Sigmoid colon (tissue), 7 donors: ENCODE measurements at regions of chr14 and their contacts with region 1.

Region 1: DNA sequence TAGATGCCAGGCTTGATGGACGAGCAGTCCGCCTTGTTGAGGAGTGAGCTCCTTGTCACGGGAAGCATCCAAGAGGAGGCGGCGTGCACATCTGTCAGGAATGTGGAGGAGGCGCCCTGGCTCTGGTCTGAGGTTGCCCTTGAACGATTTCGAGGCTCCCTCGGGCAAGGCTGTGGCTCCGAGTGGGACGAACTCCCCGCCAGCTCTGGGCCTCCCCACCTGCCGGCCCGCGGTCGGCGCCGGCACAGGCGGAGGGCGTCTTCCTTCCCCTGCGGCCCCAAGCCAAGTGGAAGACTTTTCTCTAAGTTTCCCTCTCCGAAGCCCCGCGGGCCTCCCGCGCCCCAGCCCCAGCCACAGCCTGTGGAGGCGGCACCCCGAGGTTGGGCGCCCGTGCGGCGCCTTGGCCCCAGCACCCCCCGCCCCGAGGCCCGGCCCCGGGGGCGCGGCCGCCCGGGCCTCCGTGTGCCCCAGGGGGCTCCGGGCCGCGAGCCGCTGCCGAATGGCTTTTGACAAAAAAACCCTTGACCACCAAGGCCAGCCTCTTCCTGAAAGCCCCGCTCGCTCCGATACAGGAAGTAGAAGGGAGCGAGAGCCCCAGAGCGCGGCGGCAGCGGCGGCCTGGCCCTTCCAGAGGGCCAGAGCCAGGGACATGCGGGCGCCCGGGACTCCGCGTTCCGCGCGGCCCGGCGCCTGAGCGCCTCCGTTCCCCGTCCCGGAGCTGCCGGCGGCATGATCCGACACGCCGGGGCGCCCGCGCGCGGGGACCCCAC is at the start of gene RIN3:
- DNase-seq: peak; percentile 81
- H3K4me3 ChIP-seq: peak within 1 kb of the TSS; percentile 67 to 88 (median 84)
- H3K27ac ChIP-seq: peak within 1 kb of the TSS; percentile 84 to 99 (median 92)
- H3K4me1 ChIP-seq: peaks cover 0 to 68% (median 44%) of the 10 kb centered on the region in 4 donors
- H3K27me3 ChIP-seq: no peaks in the 10 kb centered on the region
- CTCF ChIP-seq: no peak
- EP300 ChIP-seq: no peak
- POLR2A ChIP-seq: no peak
- total RNA-seq, gene RIN3: 12.7 to 31.8 (median 23.0) TPM

Region 2: DNA sequence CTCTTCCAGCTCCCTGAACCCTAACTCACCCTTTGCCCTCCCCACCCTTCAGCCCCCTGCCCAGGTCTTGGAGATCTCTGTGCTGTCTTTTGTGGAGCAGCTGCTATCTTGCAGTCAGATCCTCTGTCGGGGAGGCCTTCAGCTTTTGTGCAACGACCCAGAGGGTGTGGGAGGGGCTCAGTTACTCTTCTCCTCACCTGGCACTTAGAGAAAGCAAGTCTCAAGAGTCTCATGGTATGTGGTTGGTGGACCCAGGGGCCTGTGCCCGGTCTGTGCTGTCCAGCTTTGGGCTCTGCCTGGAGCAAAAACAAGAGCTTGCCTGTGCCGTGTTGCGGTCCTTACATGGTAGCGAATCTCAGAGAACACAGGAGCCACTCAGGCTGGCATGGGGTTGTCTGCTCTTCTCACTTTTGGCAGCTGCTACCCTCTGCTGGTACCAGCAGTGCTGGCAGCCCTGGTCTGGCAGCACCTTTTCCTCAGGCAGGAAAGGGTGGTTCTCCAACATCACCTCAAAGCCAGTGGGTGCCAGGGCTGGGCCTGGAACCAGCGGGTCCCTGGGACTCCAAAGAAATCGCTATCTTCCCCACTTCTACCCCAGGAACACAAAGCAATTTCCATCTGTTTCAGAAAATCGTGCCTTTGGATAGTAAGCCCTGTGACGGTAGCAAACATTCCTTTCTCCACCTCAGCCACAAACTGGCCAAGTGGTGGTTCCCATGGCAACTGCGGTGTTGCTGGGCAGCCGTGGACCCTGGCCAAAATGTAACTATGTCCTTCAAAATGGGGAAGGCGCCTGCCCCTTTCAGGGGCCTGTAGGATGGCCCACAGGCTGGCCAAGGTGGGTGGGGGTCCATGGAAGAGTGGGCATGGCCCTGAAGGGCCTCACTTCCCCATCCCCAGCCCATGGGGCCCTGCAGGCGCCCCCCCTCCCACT is 90.2 kb after region 1 on chr14:
- intact Hi-C with region 1: loop called (anchors 2 kb)
- DNase-seq: peak; percentile 93
- H3K4me3 ChIP-seq: no peak overlapping the region
- H3K27ac ChIP-seq: peak overlapping the region; percentile 83 to 95 (median 88)
- H3K4me1 ChIP-seq: peaks cover 0 to 80% (median 62%) of the 10 kb centered on the region in 4 donors
- H3K27me3 ChIP-seq: no peaks in the 10 kb centered on the region
- CTCF ChIP-seq: peak in 3 of 4 experiments; percentile 9 to 17 (median 11)
- EP300 ChIP-seq: peak in 1 of 4 donors; percentile 38
- POLR2A ChIP-seq: no peak

Region 3: DNA sequence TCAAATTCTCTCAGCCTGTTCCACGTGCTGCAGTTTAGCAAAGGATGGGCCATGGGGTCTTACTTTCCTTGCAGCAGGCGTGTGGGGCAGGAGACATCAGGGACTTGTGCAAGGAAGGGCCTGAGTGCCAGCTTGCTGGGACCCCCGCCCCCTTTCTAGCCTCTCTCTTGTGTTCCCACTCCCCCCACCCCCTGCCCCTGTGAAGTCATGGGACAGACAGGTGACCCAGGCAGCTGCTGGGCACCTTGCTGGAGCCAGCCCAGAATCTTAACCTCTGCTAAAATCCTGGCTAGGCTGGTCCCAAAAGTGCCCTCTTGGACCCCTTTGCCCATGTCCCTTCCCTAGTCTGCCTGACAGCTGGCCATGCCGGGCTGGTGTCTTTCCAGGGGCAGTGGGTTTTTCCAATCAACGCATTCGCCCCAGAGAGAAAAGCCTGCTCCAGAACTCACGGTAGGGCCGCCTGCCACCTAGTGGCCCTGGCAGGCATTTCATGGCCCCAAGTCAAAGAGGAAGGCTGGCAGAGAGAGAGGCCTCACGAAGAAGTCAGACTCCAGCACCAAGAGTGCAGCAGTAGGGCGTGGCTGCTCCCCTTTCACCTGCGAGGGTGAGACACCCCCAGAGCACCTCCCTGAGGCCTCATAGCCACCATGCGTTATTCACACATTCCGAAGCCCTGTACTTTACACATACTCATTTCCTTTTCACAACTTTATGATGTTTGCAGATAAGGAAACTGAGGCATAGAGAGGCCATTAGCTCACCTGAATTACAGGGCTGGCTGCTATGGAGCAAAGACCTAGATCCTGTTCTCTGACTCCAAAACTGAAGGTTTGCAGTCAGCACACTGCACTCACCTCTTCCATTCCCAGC is 167.6 kb after region 1 on chr14:
- intact Hi-C with region 1: loop called (anchors 5 kb)
- DNase-seq: peak; percentile 89
- H3K4me3 ChIP-seq: no peak overlapping the region
- H3K27ac ChIP-seq: peak overlapping the region in 3 of 4 donors; percentile 58 to 66 (median 59)
- H3K4me1 ChIP-seq: peaks cover 0 to 16% (median 11%) of the 10 kb centered on the region in 4 donors
- H3K27me3 ChIP-seq: no peaks in the 10 kb centered on the region
- CTCF ChIP-seq: peak; percentile 70 to 95 (median 92)
- EP300 ChIP-seq: no peak
- POLR2A ChIP-seq: no peak

Region 4: DNA sequence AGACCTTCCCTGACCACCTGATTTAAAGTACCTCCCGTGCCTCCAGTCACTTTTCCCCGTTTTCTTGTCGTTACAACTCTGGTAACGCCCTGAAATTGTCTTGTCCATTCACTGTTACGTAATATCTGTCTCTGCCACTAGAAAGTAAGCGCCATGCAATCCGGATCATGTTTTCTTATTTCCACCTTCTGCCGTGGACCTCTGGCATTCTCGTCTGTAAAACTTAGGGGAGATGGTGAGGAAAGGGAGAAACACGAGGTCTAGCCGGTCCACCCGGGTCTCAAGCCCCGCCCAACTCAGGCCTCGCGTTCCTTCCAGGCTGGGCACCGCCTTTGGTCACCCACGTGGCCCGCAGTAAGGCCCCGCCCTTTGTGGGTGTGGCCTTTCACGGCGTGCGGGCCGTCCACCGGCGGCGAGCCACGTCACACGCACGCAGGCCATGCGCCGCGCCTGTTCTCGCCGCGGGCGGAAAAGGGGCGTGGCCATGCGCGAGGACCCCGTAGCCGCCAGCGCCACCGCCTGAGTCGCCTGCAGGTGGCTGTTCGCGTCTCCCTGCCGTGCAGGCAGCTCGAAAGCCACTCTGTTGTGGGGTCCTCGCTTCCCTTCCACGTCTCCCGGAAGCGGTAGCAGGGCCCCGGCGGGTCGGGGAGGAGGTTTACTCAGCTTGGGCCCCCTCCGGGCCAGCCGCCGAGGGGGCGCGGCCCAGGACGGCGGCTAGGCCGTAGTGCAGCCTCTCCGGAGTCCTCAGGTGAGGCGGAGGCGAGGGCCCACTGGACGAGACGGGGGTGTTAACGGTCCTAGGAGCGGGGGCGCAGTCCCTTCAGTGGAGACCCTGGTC is 280.5 kb after region 1 on chr14 and contains the start of gene GOLGA5:
- intact Hi-C with region 1: loop called (anchors 10 kb)
- DNase-seq: peak; percentile 99
- H3K4me3 ChIP-seq: peak within 1 kb of the TSS; percentile 70 to 98 (median 95)
- H3K27ac ChIP-seq: peak within 1 kb of the TSS; percentile 86 to 92 (median 89)
- H3K4me1 ChIP-seq: peaks cover 0 to 22% (median 17%) of the 10 kb centered on the region in 4 donors
- H3K27me3 ChIP-seq: no peaks in the 10 kb centered on the region
- CTCF ChIP-seq: no peak
- EP300 ChIP-seq: peak in 1 of 4 donors; percentile 62
- POLR2A ChIP-seq: peak; percentile 35 to 56
- total RNA-seq, gene GOLGA5: 31.8 to 41.0 (median 34.7) TPM

Region 5: DNA sequence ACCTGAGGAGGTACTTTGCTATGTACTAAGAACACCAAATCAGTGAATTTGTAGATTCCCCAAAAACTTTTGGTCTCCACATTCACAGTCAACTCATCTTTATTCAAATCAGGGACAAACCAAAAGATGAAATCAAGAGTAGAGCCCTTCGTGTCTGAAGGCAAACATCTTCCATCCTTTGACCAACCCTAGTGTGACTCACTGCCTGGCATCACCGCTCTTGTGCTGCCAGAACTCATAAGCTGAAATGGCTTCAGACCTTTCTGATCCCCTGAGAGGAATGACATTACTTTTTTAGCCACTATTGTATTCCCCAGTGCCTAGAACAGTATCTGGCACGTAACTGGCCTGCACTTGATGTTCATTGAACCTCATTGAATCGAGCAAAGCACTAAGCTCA is 330.8 kb after region 1 on chr14:
- intact Hi-C with region 1: no loop called
- DNase-seq: no peak
- H3K4me3 ChIP-seq: no peak overlapping the region
- H3K27ac ChIP-seq: no peak overlapping the region
- H3K4me1 ChIP-seq: peaks cover 0 to 5% (median 0%) of the 10 kb centered on the region in 4 donors
- H3K27me3 ChIP-seq: no peaks in the 10 kb centered on the region
- CTCF ChIP-seq: no peak
- EP300 ChIP-seq: no peak
- POLR2A ChIP-seq: no peak

Region 6: GRCh38 chr14:92897922-92898565 is 384.7 kb after region 1 on chr14:
- intact Hi-C with region 1: no loop called
- DNase-seq: no peak
- H3K4me3 ChIP-seq: no peak overlapping the region
- H3K27ac ChIP-seq: no peak overlapping the region
- H3K4me1 ChIP-seq: no peaks in the 10 kb centered on the region
- H3K27me3 ChIP-seq: peaks cover 0 to 40% (median 6%) of the 10 kb centered on the region in 3 donors
- CTCF ChIP-seq: no peak
- EP300 ChIP-seq: no peak
- POLR2A ChIP-seq: no peak